MCF 10A (cell line): ENCODE measurements at regions of chr16 and their contacts with region 1.

Region 1: DNA sequence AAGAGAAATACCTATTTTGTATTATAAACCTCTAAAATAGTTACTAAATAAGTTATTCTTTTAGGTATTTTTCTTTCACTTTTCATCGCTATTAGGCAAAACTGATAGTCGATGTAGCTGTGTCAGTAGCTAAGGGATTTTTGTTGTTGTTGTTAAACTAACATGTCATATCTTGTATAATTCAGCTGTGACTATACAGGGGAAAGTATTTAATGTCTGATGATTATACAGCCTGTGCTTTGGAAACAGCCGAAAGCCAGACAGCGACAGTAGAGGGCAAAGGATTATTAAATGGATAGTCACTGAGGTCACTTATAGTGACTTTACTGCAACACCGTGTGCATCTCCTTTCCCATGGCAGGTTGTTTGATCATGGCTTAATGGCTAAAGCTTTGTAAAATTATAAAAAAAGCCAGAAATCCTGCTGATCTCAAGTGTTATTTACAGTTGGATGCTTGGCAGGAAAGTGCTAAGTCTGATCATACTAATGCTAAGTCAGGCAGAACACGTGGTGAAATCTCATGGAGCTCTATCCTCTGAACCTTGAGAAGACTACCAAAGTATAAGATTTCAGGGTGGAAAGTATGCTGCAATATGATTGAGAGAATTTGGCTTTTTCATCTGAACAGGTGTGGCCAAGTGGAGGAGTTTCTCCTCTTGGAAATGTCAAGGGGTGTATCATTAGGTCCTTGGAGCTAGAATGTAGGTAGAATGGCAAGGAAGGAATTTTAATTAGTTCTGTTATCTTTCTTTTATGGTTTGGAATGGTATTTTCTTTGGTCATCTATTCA is 88.4 kb downstream of the FTO start:
- DNase-seq: no peak
- H3K4me3 Mint-ChIP-seq: no peak overlapping the region
- H3K27ac Mint-ChIP-seq: no peak overlapping the region
- H3K4me1 Mint-ChIP-seq: peaks cover 30% of the 10 kb centered on the region
- H3K27me3 Mint-ChIP-seq: no peaks in the 10 kb centered on the region
- CTCF ChIP-seq: no peak

Region 2: DNA sequence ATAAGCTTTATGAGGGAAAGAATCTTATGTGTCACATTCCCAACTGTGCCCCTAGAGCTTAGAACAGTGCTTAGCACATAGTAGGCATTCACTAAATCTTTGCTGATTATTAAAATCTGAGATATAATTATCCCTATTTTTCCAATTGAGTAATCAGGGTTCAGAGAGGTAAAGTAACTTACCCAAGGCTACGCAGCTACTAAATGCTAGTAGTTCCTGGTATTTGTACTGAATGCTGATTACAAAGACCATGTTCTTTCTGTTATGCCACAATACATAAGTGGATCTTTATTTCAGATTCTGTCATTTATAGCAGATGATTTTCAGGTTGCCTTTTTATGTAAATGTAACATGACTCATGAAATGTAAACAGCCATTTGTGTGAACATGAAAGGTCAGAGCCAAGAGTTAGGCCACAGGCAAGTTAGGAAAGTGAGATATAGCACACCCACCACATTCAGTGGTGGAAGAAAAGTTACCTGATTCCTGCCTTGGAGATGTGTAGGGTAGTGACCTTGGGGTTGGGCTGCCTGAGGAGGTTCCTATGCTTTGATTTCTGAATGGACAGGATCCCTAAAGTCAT is 11.2 kb before region 1 on chr16:
- CTCF ChIA-PET with region 1: interaction called, 3 read pairs
- POLR2A ChIA-PET with region 1: interaction called, 13 read pairs
- intact Hi-C with region 1: no loop called
- DNase-seq: peak; percentile 81
- H3K4me3 Mint-ChIP-seq: no peak overlapping the region
- H3K27ac Mint-ChIP-seq: peak overlapping the region; percentile 78
- H3K4me1 Mint-ChIP-seq: peaks cover 64% of the 10 kb centered on the region
- H3K27me3 Mint-ChIP-seq: no peaks in the 10 kb centered on the region
- CTCF ChIP-seq: no peak

Region 3: GRCh38 chr16:53805113-53805512 is 12.8 kb after region 1 on chr16:
- CTCF ChIA-PET with region 1: no interaction called
- POLR2A ChIA-PET with region 1: interaction called, 10 read pairs
- intact Hi-C with region 1: no loop called
- DNase-seq: no peak
- H3K4me3 Mint-ChIP-seq: no peak overlapping the region
- H3K27ac Mint-ChIP-seq: no peak overlapping the region
- H3K4me1 Mint-ChIP-seq: peaks cover 44% of the 10 kb centered on the region
- H3K27me3 Mint-ChIP-seq: no peaks in the 10 kb centered on the region
- CTCF ChIP-seq: no peak